Sciatic nerve (tissue), 2 donors: ENCODE measurements at regions of chr6 and their contacts with region 1.

Region 1: GRCh38 chr6:90296346-90297114 is at the start of gene BACH2:
- DNase-seq: peak; percentile 96
- ATAC-seq: peak; percentile 83
- total RNA-seq, gene BACH2: 25.3 TPM

Region 2: DNA sequence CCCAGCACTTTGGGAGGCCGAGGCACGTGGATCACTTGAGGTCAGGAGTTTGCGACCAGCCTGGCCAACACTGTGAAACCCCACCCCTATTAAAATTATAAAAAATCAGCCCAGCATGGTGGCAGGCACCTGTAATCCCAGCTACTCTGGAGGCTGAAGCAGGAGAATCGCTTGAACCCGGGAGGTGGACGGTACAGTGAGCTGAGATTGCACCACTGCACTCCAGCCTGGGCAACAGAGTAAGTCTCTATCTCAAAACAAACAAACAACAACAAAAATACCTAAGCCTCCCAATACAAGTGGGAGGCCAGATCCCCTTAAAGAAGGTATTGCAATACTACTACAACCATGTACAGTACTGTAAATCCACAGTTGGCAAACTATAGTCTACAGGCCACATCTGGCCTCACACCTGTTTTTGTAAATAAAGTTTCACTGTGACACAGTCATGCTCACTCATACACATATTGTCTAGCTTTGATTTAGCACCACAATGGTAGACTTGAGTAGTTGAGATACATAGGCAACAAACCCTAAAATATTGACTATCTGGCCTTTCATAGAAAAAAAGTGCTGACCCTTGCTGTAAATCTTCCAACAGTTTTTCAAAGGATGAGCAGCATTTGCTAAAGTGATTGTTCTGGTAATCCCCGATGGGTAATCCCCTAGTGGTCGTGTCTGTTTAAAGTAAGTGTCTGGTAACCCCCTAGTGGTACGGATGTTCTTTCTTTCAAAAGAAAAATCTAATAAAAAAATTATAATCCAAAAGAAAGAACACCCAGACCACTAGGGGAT is 1535.1 kb before region 1 on chr6:
- intact Hi-C with region 1: no loop called
- DNase-seq: no peak
- ATAC-seq: no peak

Region 3: GRCh38 chr6:89970609-89971337 is 325.8 kb before region 1 on chr6:
- intact Hi-C with region 1: loop called (anchors 10 kb)
- DNase-seq: no peak
- ATAC-seq: peak; percentile 84

Region 4: GRCh38 chr6:90098001-90098531 is 198.5 kb before region 1 on chr6:
- intact Hi-C with region 1: loop called (anchors 10 kb)
- DNase-seq: peak; percentile 72
- ATAC-seq: peak; percentile 96

Region 5: GRCh38 chr6:91352878-91353277 is 1056.3 kb after region 1 on chr6:
- intact Hi-C with region 1: no loop called
- DNase-seq: no peak
- ATAC-seq: no peak